ENCODE measurements at regions of chr3 and their contacts with region 1.

Region 1: DNA sequence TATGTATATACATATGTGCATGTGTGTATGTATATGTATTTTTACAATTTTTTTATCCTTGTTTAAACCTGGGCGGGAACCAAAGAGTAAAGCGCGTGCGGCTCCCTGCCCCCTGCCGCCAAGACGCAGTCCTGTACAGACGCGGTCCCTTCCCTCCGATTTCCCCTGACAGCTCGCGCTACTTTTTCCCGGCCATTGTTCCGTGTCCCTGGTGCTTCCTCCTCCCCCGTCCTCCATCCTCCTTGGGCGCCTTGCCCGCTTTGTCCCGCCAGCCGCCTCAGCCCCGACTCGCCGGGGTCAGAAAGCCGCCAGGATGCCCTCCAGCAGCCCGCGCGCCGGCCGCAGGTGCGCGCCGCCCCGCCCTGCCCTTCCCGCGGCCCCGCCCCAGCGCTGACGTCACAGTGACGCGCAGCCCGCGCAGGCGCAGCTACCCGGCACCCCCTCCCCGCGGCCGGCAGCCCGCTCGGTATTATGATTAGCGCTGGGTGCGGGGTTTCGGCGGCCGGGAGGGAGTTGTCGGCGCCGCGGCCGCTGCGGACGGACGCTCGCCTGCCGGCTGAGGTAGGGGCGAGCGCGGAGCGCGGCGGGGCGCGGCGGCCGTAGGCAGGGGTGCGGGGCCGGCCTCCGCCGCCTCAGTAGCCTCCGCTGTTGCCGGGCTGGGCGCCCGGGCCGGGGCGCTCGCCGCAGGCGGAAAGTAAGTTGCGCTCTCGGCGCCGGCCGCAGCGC is at the start of gene SNRK:
- DNase-seq: peak; percentile 93
- H3K4me3 ChIP-seq: peak within 1 kb of the TSS; percentile 54 to 71 (median 66)
- H3K27ac ChIP-seq: peak within 1 kb of the TSS; percentile 87 to 96 (median 91)
- H3K4me1 ChIP-seq: peaks cover 0 to 45% (median 39%) of the 10 kb centered on the region in 4 donors
- H3K27me3 ChIP-seq: no peaks in the 10 kb centered on the region
- CTCF ChIP-seq: peak in 2 of 4 experiments; percentile 29 to 35
- EP300 ChIP-seq: peak in 1 of 4 donors; percentile 29
- POLR2A ChIP-seq: peak in 1 of 2 donors; percentile 23
- total RNA-seq, gene SNRK: 35.1 to 47.9 (median 42.1) TPM

Region 2: DNA sequence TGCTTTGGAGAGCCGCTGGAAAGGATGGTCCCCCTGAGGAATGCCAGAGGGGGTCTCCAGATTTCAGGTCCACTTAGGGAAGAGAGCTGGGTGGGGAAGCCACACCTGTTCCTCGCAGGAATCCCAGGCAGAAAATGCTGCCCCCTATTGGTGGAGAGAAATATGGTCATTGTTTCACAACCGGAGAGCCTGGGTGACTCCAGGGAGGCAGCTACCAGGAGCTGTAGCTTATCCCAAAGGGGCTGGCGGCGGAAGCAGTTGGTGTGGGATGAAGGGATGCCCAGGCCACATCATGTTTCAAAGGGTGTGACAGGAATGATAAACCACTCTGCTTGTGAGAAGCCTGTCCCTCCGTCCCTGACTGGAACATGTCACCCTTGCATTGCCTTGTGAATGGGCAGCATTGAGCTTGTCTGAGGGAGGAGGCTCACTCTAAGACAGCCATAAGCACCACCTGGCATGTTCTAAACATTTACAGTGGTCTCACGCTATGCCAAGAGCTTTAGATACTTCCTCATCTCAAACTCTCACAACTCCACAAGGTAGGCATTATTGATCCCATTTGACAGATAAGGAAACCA is 214.9 kb before region 1 on chr3:
- intact Hi-C with region 1: no loop called
- DNase-seq: no peak
- H3K4me3 ChIP-seq: no peak overlapping the region
- H3K27ac ChIP-seq: no peak overlapping the region
- H3K4me1 ChIP-seq: no peaks in the 10 kb centered on the region
- H3K27me3 ChIP-seq: no peaks in the 10 kb centered on the region
- CTCF ChIP-seq: peak in 1 of 4 experiments; percentile 32
- EP300 ChIP-seq: no peak
- POLR2A ChIP-seq: no peak

Region 3: GRCh38 chr3:43105596-43106292 is 180.5 kb before region 1 on chr3 and contains the start of gene POMGNT2:
- intact Hi-C with region 1: loop called (anchors 5 kb)
- DNase-seq: peak; percentile 93
- H3K4me3 ChIP-seq: peak within 1 kb of the TSS; percentile 72 to 91 (median 82)
- H3K27ac ChIP-seq: peak within 1 kb of the TSS; percentile 66 to 83 (median 72)
- H3K4me1 ChIP-seq: peaks cover 0 to 30% (median 23%) of the 10 kb centered on the region in 4 donors
- H3K27me3 ChIP-seq: no peaks in the 10 kb centered on the region
- CTCF ChIP-seq: no peak
- EP300 ChIP-seq: no peak
- POLR2A ChIP-seq: no peak
- total RNA-seq, gene POMGNT2: 15.5 to 20.2 (median 17.2) TPM

Region 4: GRCh38 chr3:43153216-43154083 is 132.8 kb before region 1 on chr3:
- intact Hi-C with region 1: no loop called
- DNase-seq: peak; percentile 89
- H3K4me3 ChIP-seq: no peak overlapping the region
- H3K27ac ChIP-seq: peak overlapping the region; percentile 39 to 71 (median 57)
- H3K4me1 ChIP-seq: peaks cover 0 to 19% (median 16%) of the 10 kb centered on the region in 4 donors
- H3K27me3 ChIP-seq: no peaks in the 10 kb centered on the region
- CTCF ChIP-seq: peak in 2 of 4 experiments; percentile 12 to 34
- EP300 ChIP-seq: peak in 1 of 4 donors; percentile 14
- POLR2A ChIP-seq: no peak

Region 5: DNA sequence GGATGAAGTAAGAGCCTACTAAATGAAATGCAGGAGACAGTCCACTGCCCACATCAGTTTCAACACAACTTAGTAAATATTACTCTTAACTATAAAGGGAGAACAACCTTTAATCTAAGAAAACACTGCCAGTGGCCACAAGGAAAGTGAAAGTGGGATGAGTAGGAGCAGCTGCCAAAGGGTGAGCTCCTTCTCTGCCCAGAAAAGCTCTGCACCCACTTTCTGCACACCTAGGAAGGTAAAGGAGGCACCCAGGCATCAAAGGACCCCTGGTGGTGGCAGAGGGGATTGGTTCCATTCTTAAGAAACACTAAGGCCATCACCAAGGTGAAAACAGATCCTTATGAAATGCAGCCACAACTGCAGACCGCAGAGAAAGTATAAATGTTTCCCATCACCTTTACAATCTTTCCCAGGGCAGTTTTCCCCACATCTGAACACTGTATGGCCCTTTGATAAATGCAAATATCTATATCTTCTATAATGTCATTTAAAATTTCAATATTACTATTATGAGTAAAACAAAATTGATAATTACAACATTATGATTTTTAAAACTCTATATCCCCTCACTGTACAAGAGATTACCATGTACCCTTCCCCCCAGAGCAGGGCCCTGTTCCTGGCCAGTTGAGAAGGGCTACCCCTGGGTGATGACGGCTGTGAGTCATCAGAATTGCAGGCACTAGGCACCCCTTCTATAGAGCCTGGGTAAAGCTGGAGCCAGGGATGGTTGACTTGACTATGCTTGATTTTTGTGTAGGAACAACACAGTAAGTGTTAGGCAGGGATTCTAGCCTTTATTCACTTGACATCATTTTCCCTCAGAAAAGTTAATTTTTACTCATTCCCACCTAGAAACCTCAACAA is 92.0 kb after region 1 on chr3:
- intact Hi-C with region 1: loop called (anchors 5 kb)
- DNase-seq: no peak
- H3K4me3 ChIP-seq: no peak overlapping the region
- H3K27ac ChIP-seq: peak overlapping the region; percentile 65 to 85 (median 75)
- H3K4me1 ChIP-seq: peaks cover 0 to 32% (median 29%) of the 10 kb centered on the region in 4 donors
- H3K27me3 ChIP-seq: no peaks in the 10 kb centered on the region
- CTCF ChIP-seq: peak in 3 of 4 experiments; percentile 27 to 32 (median 32)
- EP300 ChIP-seq: no peak
- POLR2A ChIP-seq: no peak

Region 6: DNA sequence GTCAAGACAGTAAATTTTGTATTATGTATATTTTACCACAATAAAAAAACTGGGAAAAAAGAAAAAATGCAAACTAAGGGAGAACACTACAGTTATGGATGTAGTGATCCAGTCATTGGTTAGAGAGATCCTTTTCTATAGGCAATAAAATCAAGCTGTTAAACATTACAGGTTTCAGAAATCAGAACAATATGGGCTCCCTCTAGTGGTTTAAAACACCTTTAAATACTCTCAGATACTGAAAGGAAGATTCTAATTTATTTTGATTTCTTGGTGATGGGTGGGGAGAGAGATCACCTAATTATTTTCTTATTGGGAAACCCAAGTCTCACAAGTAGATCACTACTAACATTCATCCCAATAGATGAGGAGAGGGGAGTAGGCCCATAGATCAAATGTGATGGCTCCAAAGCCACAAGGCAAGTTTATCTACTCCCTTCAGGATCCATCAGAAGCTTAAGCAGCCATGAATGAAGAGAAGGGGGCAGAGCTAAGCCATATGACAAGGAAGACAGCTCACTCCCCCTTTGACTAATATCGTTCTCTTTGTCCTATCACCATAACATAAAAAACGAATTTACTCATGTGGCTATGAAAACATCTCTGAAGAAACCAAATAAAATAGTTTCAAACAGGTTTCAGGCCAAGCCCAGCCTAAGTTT is 216.9 kb after region 1 on chr3:
- intact Hi-C with region 1: loop called (anchors 5 kb)
- DNase-seq: no peak
- H3K4me3 ChIP-seq: no peak overlapping the region
- H3K27ac ChIP-seq: no peak overlapping the region
- H3K4me1 ChIP-seq: peaks cover 0 to 3% (median 0%) of the 10 kb centered on the region in 4 donors
- H3K27me3 ChIP-seq: no peaks in the 10 kb centered on the region
- CTCF ChIP-seq: peak; percentile 13 to 52 (median 33)
- EP300 ChIP-seq: no peak
- POLR2A ChIP-seq: no peak

Region 7: DNA sequence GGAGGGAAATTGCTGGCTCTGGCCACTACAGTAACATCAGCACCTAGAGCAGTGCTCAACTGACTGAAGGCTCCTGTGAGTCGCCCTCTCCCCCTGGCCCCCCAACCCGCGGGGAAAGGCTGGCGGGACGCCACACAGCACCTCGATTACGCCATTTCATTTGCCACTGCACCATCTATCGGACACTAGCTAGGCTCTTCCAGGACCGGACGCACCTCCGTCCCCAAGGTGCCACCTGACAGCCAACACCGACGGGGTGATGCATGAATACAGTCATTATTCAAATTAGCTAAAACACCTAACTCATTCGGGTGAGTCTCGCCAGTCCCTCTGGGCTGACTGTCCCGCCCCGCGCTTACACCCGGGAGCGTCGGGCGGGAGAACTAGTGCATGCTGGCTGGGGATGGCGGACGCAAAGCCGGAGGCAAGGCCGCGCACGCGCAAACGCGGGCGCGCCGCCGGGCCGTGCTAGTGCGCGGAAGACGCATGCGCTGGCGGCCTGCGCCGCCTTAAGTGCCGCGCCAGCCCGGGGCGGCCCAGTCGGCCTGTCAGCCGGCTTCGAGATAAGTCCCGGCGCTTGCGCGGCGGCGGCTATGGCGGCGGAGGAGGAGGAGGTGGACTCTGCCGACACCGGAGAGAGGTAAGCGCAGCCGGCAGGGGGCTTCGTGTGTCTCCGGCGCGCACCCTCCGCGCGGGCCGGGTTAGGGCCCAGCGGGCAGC is 404.3 kb after region 1 on chr3 and contains the start of gene ABHD5:
- intact Hi-C with region 1: loop called (anchors 5 kb)
- DNase-seq: peak; percentile 93
- H3K4me3 ChIP-seq: peak within 1 kb of the TSS; percentile 63 to 93 (median 88)
- H3K27ac ChIP-seq: peak within 1 kb of the TSS; percentile 89 to 94 (median 92)
- H3K4me1 ChIP-seq: peaks cover 0 to 31% (median 19%) of the 10 kb centered on the region in 4 donors
- H3K27me3 ChIP-seq: no peaks in the 10 kb centered on the region
- CTCF ChIP-seq: no peak
- EP300 ChIP-seq: no peak
- POLR2A ChIP-seq: peak; percentile 95 to 96
- total RNA-seq, gene ABHD5: 11.1 to 24.7 (median 22.3) TPM

Measured in sigmoid colon (tissue), 7 donors.